ENCODE measurements at regions of chr20 and their contacts with region 1.

Region 1: GRCh38 chr20:20664795-20665589 is 47.5 kb downstream of the RALGAPA2 start:
- DNase-seq: peak; percentile 34
- CTCF ChIP-seq: peak; percentile 72

Region 2: GRCh38 chr20:20680991-20681508 is 16.1 kb after region 1 on chr20:
- CTCF ChIA-PET with region 1: interaction called, 11 read pairs
- POLR2A ChIA-PET with region 1: no interaction called
- DNase-seq: peak; percentile 30
- CTCF ChIP-seq: no peak

Region 3: DNA sequence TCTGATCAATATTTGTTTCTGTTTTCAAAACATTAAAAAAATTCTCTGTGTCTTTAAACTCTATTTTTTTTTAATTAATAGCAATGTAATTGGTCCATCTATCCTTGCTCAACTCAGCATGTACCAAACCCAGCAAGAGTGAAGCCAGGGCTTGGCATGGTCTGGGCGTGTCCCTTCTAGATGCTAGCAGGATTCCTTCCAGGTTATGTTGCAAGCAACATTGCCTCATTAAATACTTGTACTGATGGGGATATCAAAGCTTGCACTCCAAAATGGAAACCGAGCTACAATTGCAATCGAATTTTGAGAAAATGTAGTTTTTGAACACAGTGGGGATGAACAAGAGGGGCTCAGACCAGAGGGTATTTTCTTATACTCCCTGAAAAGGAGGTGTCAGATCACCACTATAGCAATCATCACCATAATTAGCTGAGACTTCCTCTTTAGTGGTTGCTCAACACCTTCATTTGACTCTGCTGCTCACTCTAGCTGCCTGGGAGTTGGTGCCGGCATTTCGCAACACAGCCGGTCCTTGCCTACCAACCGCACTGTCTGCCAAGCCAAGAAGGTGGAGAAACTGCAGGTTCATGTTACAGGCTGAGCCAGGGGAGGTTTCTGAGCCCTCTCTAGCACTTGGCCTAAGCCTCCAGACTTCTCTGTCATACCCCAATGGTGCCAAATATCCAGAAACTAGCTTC is 115.3 kb after region 1 on chr20:
- CTCF ChIA-PET with region 1: no interaction called
- POLR2A ChIA-PET with region 1: no interaction called
- DNase-seq: peak; percentile 46
- CTCF ChIP-seq: no peak

Measured in GM10248 (cell line).